ENCODE measurements at regions of chr18 and their contacts with region 1.

Region 1: GRCh38 chr18:48951448-48952286 is 902 bp upstream of the SMAD7 start:
- DNase-seq: peak; percentile 61 to 93 (median 80)
- ATAC-seq: peak; percentile 35
- H3K4me3 ChIP-seq: peak overlapping the region; percentile 77 to 85
- H3K4me3 Mint-ChIP-seq: peak overlapping the region; percentile 94
- H3K27ac ChIP-seq: peak overlapping the region; percentile 82 to 97
- H3K27ac Mint-ChIP-seq: peak overlapping the region; percentile 97
- H3K4me1 ChIP-seq: peaks cover 24% of the 10 kb centered on the region
- H3K4me1 Mint-ChIP-seq: peaks cover 51% of the 10 kb centered on the region
- H3K27me3 ChIP-seq: no peaks in the 10 kb centered on the region
- H3K27me3 Mint-ChIP-seq: peaks cover 3% of the 10 kb centered on the region
- CTCF ChIP-seq: no peak

Region 2: DNA sequence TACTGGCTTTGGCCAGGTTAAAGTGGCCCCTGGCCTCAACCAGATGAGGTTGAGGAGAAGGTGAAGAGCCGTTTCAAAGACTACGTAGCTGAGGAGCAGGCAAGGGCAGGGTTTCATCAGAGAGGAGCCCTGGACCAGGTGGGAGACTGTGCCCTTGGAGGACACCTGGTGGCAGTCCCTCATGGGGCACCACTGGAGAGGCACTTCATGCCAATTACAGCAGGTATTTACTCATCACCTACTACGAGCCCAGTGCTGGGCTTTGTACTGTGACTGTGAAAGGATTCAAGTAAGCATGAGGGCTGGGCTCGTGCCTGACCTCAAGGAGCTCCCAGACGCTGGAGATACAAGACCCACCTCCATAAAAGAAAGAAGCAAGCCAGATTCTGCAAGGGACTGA is 38.5 kb before region 1 on chr18:
- CTCF ChIA-PET with region 1: interaction called, 7 read pairs
- POLR2A ChIA-PET with region 1: no interaction called
- intact Hi-C with region 1: loop called in 1 of 2 experiments (anchors 5 kb)
- DNase-seq: peak in 7 of 9 experiments; percentile 33 to 76 (median 54)
- ATAC-seq: peak; percentile 67
- H3K4me3 ChIP-seq: no peak overlapping the region
- H3K4me3 Mint-ChIP-seq: no peak overlapping the region
- H3K27ac ChIP-seq: no peak overlapping the region
- H3K27ac Mint-ChIP-seq: no peak overlapping the region
- H3K4me1 ChIP-seq: peaks cover 18% of the 10 kb centered on the region
- H3K4me1 Mint-ChIP-seq: peaks cover 31% of the 10 kb centered on the region
- H3K27me3 ChIP-seq: no peaks in the 10 kb centered on the region
- H3K27me3 Mint-ChIP-seq: no peaks in the 10 kb centered on the region
- CTCF ChIP-seq: peak; percentile 41

Region 3: GRCh38 chr18:48940854-48941611 is 10.6 kb before region 1 on chr18:
- CTCF ChIA-PET with region 1: interaction called, 16 read pairs
- POLR2A ChIA-PET with region 1: interaction called, 26 read pairs
- intact Hi-C with region 1: loop called (anchors 1 kb)
- DNase-seq: peak; percentile 74 to 99 (median 90)
- ATAC-seq: peak; percentile 81
- H3K4me3 ChIP-seq: peak overlapping the region; percentile 20 to 49
- H3K4me3 Mint-ChIP-seq: peak overlapping the region; percentile 82
- H3K27ac ChIP-seq: peak overlapping the region; percentile 53 to 80
- H3K27ac Mint-ChIP-seq: peak overlapping the region; percentile 96
- H3K4me1 ChIP-seq: peaks cover 81% of the 10 kb centered on the region
- H3K4me1 Mint-ChIP-seq: peaks cover 93% of the 10 kb centered on the region
- H3K27me3 ChIP-seq: no peaks in the 10 kb centered on the region
- H3K27me3 Mint-ChIP-seq: no peaks in the 10 kb centered on the region
- CTCF ChIP-seq: no peak

Region 4: GRCh38 chr18:48975649-48976204 is 24.1 kb after region 1 on chr18:
- CTCF ChIA-PET with region 1: no interaction called
- POLR2A ChIA-PET with region 1: no interaction called
- intact Hi-C with region 1: loop called (anchors 1 kb)
- DNase-seq: peak in 8 of 9 experiments; percentile 28 to 77 (median 58)
- ATAC-seq: peak; percentile 77
- H3K4me3 ChIP-seq: peak overlapping the region; percentile 48 to 50
- H3K4me3 Mint-ChIP-seq: peak overlapping the region; percentile 59
- H3K27ac ChIP-seq: no peak overlapping the region
- H3K27ac Mint-ChIP-seq: no peak overlapping the region
- H3K4me1 ChIP-seq: peaks cover 11% of the 10 kb centered on the region
- H3K4me1 Mint-ChIP-seq: peaks cover 7% of the 10 kb centered on the region
- H3K27me3 ChIP-seq: no peaks in the 10 kb centered on the region
- H3K27me3 Mint-ChIP-seq: peaks cover 29% of the 10 kb centered on the region
- CTCF ChIP-seq: no peak

Region 5: DNA sequence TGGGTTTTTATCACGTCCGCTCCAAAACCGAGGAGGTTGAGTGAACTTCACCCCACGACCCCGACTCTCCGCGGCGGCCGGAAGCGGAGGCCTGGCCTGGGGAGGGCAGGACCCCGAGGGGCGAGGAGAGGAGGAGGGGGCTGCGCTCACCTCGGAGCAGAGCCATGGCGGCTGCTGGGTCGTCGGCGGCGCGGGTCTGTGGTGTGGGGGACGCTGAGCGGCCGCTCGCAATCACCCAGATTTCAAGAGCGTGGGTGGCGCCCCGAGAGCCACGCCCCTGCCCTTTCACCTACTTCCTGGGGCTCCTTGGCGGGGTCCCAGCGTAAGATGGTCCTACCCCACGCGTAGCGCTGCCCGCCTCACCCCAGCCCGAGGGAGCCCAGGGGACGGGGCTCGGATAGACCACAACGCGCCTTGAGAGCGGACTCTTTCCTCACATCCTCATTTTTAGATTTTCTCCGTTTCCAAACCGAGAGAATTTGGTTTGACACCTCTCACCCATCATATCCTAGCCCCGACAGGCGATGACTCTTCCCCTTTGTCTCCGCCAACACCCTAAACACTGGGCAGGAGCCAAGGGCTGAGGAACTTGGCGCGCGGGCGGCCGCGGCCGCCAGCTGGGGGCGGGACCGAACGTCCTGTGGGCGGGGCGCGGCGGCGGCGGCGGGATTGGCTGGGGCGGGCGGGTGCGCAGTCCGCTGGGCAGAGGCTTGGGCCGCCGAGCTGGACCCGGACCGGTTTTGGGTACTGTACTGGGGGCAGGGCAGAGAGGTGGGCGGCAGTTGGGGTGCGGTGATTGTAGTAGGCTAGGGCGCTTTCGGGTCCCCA is 861.9 kb after region 1 on chr18 and contains the start of gene ACAA2:
- CTCF ChIA-PET with region 1: no interaction called
- POLR2A ChIA-PET with region 1: no interaction called
- intact Hi-C with region 1: loop called in 1 of 2 experiments (anchors 10 kb)
- DNase-seq: peak; percentile 53 to 91 (median 77)
- ATAC-seq: peak; percentile 81
- H3K4me3 ChIP-seq: peak within 1 kb of the TSS; percentile 88 to 93
- H3K4me3 Mint-ChIP-seq: peak within 1 kb of the TSS; percentile 97
- H3K27ac ChIP-seq: peak within 1 kb of the TSS; percentile 90 to 95
- H3K27ac Mint-ChIP-seq: peak within 1 kb of the TSS; percentile 95
- H3K4me1 ChIP-seq: peaks cover 37% of the 10 kb centered on the region
- H3K4me1 Mint-ChIP-seq: peaks cover 62% of the 10 kb centered on the region
- H3K27me3 ChIP-seq: no peaks in the 10 kb centered on the region
- H3K27me3 Mint-ChIP-seq: no peaks in the 10 kb centered on the region
- CTCF ChIP-seq: no peak
- total RNA-seq, gene ACAA2: 9.5 to 10.0 TPM